ENCODE measurements at regions of chr2 and their contacts with region 1.

Region 1: GRCh38 chr2:229297247-229297646 is 26.2 kb upstream of the PID1 start:
- DNase-seq: no peak
- H3K4me3 ChIP-seq: no peak overlapping the region
- H3K4me3 Mint-ChIP-seq: no peak overlapping the region
- H3K27ac Mint-ChIP-seq: no peak overlapping the region
- H3K4me1 ChIP-seq: no peaks in the 10 kb centered on the region
- H3K4me1 Mint-ChIP-seq: no peaks in the 10 kb centered on the region
- H3K27me3 ChIP-seq: no peaks in the 10 kb centered on the region; the same call in 1 of the 2 replicates
- H3K27me3 Mint-ChIP-seq: peaks cover 3% of the 10 kb centered on the region
- CTCF ChIP-seq: no peak

Region 2: GRCh38 chr2:229202646-229203045 is 94.6 kb before region 1 on chr2:
- CTCF ChIA-PET with region 1: interaction called, 10 read pairs
- POLR2A ChIA-PET with region 1: no interaction called
- intact Hi-C with region 1: no loop called
- DNase-seq: no peak
- H3K4me3 ChIP-seq: no peak overlapping the region
- H3K4me3 Mint-ChIP-seq: no peak overlapping the region
- H3K27ac Mint-ChIP-seq: no peak overlapping the region
- H3K4me1 ChIP-seq: no peaks in the 10 kb centered on the region
- H3K4me1 Mint-ChIP-seq: no peaks in the 10 kb centered on the region
- H3K27me3 ChIP-seq: no peaks in the 10 kb centered on the region
- H3K27me3 Mint-ChIP-seq: no peaks in the 10 kb centered on the region
- CTCF ChIP-seq: no peak

Measured in Caco-2 (cell line).